ENCODE measurements at regions of chr22 and their contacts with region 1.

Region 1: GRCh38 chr22:19495562-19496323 is 16.0 kb downstream of the CDC45 start:
- DNase-seq: no peak
- H3K4me3 ChIP-seq: no peak overlapping the region
- H3K27ac ChIP-seq: no peak overlapping the region
- H3K4me1 ChIP-seq: no peaks in the 10 kb centered on the region
- H3K27me3 ChIP-seq: peaks cover 4% of the 10 kb centered on the region
- CTCF ChIP-seq: peak; percentile 49

Region 2: GRCh38 chr22:19568337-19569275 is 72.9 kb after region 1 on chr22:
- intact Hi-C with region 1: no loop called
- DNase-seq: no peak
- H3K4me3 ChIP-seq: no peak overlapping the region
- H3K27ac ChIP-seq: peak overlapping the region; percentile 80
- H3K4me1 ChIP-seq: peaks cover 59% of the 10 kb centered on the region
- H3K27me3 ChIP-seq: no peaks in the 10 kb centered on the region
- CTCF ChIP-seq: no peak

Region 3: GRCh38 chr22:19619144-19620009 is 123.6 kb after region 1 on chr22:
- intact Hi-C with region 1: no loop called
- DNase-seq: no peak
- H3K4me3 ChIP-seq: no peak overlapping the region
- H3K27ac ChIP-seq: no peak overlapping the region
- H3K4me1 ChIP-seq: peaks cover 15% of the 10 kb centered on the region
- H3K27me3 ChIP-seq: peaks cover 54% of the 10 kb centered on the region
- CTCF ChIP-seq: no peak

Region 4: DNA sequence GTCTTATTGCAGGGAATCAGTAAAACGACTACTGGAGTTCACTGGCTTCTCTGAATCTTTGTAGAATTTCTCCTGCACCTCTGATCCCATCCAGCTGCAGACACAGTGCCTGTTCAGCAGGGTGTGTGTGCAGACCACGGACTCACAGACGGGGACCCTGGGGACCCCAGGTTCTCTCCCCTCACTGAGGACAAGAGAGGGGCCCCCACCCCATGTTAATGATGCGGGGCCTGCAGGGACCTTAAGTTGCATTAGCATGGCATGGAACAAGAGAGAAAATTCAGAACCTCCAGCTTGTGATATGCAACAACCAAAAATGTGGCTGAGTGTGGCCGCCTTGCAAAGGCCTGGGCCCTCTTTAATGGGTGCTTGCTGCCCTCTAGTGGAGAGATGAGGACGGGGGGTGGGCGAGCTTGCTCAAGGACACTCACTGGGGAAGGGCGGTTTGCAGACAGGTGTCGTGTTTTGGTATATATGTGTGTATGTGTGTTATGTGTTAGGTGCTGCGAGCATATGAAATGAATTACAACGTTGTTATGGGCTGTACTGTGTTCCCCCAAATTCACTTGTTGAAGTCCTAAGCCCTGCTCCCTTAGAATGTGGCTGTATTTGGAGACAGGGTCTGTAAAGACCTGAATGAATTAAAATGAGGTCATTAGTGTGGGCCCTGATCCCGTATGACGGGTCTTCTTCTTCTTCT is 134.1 kb after region 1 on chr22:
- intact Hi-C with region 1: loop called (anchors 5 kb)
- DNase-seq: peak; percentile 65
- H3K4me3 ChIP-seq: no peak overlapping the region
- H3K27ac ChIP-seq: no peak overlapping the region
- H3K4me1 ChIP-seq: peaks cover 6% of the 10 kb centered on the region
- H3K27me3 ChIP-seq: peaks cover 17% of the 10 kb centered on the region
- CTCF ChIP-seq: peak; percentile 93

Region 5: GRCh38 chr22:19641254-19641982 is 145.7 kb after region 1 on chr22:
- intact Hi-C with region 1: no loop called
- DNase-seq: no peak
- H3K4me3 ChIP-seq: no peak overlapping the region
- H3K27ac ChIP-seq: no peak overlapping the region
- H3K4me1 ChIP-seq: no peaks in the 10 kb centered on the region
- H3K27me3 ChIP-seq: peaks cover 48% of the 10 kb centered on the region
- CTCF ChIP-seq: peak; percentile 46

Measured in left ventricle myocardium inferior (tissue), 1 donor.